ENCODE measurements at regions of chr15 and their contacts with region 1.

Region 1: DNA sequence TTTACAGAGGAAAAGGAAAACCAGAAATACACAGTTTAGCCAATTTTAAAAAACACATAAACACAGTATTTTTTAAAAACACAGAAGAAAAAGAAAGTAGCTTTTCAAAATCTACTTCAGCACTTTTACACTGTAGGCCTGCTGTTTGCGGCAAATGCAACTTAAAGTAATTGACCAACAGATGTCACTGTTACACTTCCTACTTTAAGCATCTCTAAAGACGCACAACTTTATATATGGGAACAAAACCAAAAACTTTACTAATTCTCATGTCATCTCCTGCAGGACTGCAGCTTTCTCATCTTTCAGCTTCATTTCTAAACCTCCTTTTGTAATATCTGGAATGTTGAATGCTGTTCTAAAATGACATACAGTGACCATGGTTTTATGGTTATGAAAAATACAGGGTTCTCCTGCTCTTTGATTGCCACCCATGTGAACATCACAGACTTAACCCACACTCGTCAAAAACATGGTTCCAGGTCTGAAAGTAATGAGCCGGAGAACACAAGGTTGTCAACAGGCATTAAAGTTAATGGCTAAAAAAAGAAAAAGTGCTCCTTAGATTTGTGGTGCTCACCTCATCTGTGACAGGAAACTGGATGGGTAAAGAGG is 107.9 kb downstream of the FMN1 start:
- DNase-seq: no peak

Region 2: DNA sequence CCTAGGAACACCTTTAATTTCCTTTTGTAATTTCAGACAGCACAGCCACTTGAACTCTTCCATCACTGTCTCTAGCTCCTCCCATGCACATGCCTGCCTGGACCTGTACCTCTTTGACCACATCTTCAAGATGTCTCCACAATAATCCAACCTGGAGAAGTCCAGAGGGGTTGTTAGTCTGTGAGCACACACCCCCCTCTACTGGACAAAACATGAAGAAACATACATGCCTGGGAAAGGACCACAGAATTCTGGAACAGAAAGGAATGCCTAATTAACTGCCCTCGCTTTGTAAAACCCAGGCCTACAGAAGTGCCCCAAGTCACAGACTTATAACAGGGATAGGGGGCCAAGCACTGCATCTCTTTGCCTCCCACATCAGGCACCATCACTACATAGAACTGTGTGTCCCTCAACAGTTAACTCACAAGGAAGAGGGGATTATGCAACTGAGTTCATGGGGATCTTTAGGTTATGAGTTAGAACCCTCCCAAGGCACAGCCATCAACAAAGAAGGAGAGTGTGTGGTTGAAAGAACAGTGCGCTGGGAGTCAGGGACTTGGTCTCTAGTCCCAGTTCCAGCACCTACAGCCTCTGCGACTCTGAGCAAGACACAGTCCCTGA is 46.2 kb after region 1 on chr15:
- intact Hi-C with region 1: loop called (anchors 2 kb)
- DNase-seq: no peak

Region 3: DNA sequence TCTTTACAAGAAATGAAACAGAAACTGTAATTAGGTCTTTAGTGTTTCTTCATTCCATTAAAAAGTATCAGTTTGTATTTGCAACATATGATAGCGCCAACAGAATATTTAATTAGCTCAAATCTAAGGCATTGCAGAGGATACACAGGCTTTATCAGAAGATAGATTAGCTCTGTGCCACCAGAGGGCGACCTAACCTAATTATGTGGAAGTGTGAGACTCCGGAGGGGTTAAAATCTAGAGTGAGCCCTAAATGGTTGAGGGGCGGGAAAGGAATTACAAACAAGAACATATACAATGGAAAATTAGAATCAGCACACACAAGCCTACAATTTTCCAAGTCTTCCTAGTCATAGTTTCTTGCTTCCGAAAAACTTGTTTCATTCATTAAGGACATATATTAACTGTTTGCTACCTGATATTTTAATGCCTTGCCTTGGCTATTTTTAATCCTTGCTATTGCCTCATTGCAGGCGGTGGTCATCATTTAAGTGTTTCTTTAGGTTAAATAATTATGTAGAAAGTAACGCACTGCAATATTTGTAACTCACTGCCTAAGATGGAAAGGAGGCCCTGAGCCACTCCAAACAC is 206.2 kb after region 1 on chr15:
- intact Hi-C with region 1: loop called (anchors 5 kb)
- DNase-seq: peak in 5 of 10 donors; percentile 41 to 70 (median 62)

Region 4: DNA sequence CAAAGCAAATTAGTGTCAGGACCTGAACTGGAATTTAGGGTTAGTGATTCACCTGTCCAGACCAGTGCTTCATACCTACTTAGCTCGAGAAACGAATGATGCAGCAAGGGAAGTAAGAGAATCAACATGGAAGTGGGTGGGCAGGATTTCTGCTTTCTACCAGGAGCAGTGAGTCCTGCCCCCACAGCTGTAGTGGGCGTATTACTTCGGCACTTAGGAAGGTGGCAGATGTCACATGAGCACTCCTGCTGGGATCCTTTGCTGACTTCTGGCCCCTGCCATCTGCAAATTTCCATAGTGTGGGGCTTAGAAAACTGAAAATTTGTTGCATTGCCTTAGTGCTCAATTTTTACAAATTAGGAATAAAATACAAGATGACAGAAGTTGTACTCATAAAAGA is 255.3 kb after region 1 on chr15:
- intact Hi-C with region 1: no loop called
- DNase-seq: no peak

Region 5: DNA sequence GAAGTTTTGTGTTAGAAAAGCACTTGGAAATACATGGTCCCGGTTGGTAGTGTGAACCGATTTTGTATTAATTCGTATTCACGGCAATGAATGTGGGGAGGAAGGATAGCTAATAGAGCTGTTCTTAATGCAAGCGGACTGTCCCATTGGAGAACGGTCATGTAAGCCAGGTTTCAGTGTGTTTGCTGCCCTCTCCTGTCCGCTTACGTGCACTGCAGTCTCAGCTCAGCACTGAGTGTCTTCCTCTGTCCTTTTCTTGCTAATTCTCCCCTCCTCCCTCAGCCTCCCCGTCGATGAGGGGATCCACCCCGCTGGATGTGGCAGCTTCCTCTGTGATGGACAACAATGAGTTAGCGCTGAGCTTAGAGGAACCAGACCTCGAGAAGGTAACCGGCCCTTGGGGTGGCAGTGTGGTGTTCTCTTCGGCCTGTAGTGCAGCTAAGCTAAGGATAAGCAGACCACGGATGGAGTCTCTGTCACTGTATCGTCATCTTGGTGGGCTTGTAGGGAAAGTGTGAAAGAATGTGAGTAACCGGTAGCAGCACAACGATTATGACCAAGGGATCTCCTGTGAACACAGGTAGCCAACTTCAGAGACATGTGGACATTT is 614.2 kb after region 1 on chr15:
- intact Hi-C with region 1: loop called (anchors 2 kb)
- DNase-seq: peak; percentile 50 to 96 (median 80)

Measured in posterior cingulate gyrus (tissue), 11 donors.